ENCODE measurements at regions of chr3 and their contacts with region 1.

Region 1: GRCh38 chr3:46208167-46208704 is at the start of gene CCR1:
- DNase-seq: peak; percentile 67
- CTCF ChIP-seq: peak; percentile 63

Region 2: GRCh38 chr3:45528429-45528828 is 679.8 kb before region 1 on chr3:
- CTCF ChIA-PET with region 1: no interaction called
- POLR2A ChIA-PET with region 1: no interaction called
- DNase-seq: no peak
- CTCF ChIP-seq: no peak

Region 3: GRCh38 chr3:46186471-46187340 is 21.5 kb before region 1 on chr3:
- CTCF ChIA-PET with region 1: interaction called, 12 read pairs
- POLR2A ChIA-PET with region 1: no interaction called
- DNase-seq: peak; percentile 67
- CTCF ChIP-seq: no peak

Region 4: GRCh38 chr3:46228259-46229242 is 20.3 kb after region 1 on chr3:
- CTCF ChIA-PET with region 1: no interaction called
- POLR2A ChIA-PET with region 1: no interaction called
- DNase-seq: no peak
- CTCF ChIP-seq: peak; percentile 0

Region 5: DNA sequence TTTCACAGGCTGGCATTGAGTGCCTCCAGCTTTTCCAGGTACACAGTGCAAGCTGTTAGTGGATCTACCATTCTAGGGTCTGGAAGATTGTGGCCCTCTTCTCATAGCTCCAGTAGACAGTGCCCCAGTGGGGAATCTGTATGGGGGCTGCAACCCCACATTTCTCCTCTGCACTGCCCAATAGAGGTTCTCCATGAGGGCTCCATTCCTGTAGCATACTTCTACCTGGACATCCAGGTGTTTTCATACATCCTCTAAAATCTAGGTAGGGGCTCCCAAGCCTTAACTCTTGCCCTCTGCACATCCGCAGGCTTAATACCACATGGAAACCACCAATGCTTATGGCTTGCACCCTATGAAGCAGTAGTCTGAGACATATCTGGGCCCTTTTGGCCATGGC is 130.6 kb after region 1 on chr3:
- CTCF ChIA-PET with region 1: no interaction called
- POLR2A ChIA-PET with region 1: no interaction called
- DNase-seq: no peak
- CTCF ChIP-seq: no peak

Measured in GM10248 (cell line).